AG04449 (cell line): ENCODE measurements at regions of chr7 and their contacts with region 1.

Region 1: DNA sequence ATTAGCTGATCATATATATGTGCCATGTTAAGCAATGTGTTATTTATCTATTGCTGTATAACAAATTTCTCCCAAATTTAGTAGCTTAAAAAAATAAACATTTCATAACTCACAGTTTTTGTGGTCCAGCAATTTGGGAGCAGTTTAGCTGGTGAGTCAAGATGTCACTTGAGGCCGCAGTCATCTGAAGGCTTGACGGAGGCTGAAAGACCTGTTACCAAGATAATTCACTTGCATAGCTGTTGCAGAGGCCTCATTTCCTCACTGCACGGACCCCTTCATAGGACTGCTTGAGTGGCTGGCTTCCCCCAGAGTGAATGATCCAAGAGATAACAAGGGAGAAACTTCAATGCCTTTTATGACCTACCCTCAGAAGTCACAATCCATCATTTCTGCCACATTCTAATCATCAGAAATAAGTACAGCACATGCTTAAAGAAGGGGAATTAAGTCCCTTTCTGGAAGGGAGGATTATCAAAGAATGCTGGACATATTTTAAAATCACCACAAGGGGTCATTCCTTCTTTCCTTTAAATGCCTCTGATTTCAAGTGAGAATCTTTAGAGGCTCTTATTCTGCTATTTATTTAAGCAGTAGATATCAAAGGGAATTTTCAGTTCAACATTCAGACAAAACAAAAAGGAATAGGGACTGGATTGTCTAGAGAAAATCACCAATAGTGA is 10.5 kb upstream of the SRPK2 start:
- DNase-seq: no peak
- H3K4me3 ChIP-seq: no peak overlapping the region
- CTCF ChIP-seq: no peak

Region 2: DNA sequence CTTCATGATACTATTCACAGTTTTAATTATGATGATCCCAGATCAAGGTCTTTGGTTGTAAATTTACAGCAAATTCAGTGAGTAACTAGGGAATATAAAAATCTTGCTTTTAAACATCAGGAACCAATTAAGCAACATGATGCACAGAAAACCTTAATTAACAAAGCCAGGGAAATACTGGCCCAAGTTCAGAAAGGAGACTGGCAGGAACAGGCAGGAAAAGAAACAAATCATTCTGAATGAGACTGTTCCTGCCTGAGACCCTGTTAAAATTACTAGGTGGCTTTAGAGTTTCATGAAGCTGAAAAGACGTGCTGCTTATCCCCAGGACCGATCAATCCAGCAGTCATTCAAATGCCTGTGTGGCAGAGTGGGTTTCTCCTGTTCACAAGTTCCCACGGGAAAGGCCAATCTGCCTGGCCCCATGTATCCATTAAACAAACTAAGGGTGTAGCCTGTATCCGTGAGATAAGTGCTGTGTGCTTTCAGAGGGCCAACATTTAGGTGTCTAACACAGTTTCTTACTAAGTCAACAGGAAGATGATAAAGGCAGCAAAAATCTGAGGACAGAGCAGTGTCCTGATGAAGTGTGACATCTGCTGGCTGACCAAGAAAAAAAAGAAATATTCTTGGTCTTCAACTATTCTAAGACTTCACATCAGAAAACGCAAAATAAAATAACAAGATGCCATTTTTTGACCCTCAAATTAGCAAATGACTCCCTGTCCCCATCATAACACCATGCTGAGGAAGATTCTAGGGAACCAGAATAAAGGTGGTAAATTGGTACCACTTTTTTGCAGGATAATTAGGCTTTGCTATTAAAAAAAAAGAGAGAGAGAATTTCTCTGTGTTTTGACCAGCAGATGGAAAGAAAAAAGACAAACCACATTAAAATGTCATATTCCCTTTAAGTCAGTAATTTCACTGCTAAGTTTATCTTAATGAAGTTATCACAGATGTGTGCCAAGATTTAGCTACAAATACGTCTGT is 88.7 kb after region 1 on chr7:
- CTCF ChIA-PET with region 1: interaction called, 10 read pairs
- POLR2A ChIA-PET with region 1: no interaction called
- DNase-seq: peak; percentile 65
- H3K4me3 ChIP-seq: no peak overlapping the region; the same call in 1 of the 2 replicates
- CTCF ChIP-seq: no peak